Caco-2 (cell line): ENCODE measurements at regions of chr3 and their contacts with region 1.

Region 1: GRCh38 chr3:32781210-32781968 is 36.4 kb upstream of the TRIM71 start:
- DNase-seq: peak; percentile 89 to 92
- H3K4me3 ChIP-seq: peak overlapping the region; percentile 88
- H3K4me3 Mint-ChIP-seq: peak overlapping the region; percentile 95
- H3K27ac Mint-ChIP-seq: peak overlapping the region; percentile 95
- H3K4me1 ChIP-seq: peaks cover 11% of the 10 kb centered on the region
- H3K4me1 Mint-ChIP-seq: peaks cover 13% of the 10 kb centered on the region
- H3K27me3 ChIP-seq: no peaks in the 10 kb centered on the region
- H3K27me3 Mint-ChIP-seq: no peaks in the 10 kb centered on the region
- CTCF ChIP-seq: peak; percentile 77 to 80

Region 2: GRCh38 chr3:32733631-32734229 is 47.7 kb before region 1 on chr3:
- CTCF ChIA-PET with region 1: interaction called, 4 read pairs
- POLR2A ChIA-PET with region 1: no interaction called
- intact Hi-C with region 1: loop called (anchors 1 kb)
- DNase-seq: peak in 1 of 2 experiments; percentile 39
- H3K4me3 ChIP-seq: no peak overlapping the region
- H3K4me3 Mint-ChIP-seq: no peak overlapping the region
- H3K27ac Mint-ChIP-seq: no peak overlapping the region
- H3K4me1 ChIP-seq: no peaks in the 10 kb centered on the region
- H3K4me1 Mint-ChIP-seq: no peaks in the 10 kb centered on the region
- H3K27me3 ChIP-seq: no peaks in the 10 kb centered on the region
- H3K27me3 Mint-ChIP-seq: no peaks in the 10 kb centered on the region
- CTCF ChIP-seq: peak; percentile 47 to 52

Region 3: DNA sequence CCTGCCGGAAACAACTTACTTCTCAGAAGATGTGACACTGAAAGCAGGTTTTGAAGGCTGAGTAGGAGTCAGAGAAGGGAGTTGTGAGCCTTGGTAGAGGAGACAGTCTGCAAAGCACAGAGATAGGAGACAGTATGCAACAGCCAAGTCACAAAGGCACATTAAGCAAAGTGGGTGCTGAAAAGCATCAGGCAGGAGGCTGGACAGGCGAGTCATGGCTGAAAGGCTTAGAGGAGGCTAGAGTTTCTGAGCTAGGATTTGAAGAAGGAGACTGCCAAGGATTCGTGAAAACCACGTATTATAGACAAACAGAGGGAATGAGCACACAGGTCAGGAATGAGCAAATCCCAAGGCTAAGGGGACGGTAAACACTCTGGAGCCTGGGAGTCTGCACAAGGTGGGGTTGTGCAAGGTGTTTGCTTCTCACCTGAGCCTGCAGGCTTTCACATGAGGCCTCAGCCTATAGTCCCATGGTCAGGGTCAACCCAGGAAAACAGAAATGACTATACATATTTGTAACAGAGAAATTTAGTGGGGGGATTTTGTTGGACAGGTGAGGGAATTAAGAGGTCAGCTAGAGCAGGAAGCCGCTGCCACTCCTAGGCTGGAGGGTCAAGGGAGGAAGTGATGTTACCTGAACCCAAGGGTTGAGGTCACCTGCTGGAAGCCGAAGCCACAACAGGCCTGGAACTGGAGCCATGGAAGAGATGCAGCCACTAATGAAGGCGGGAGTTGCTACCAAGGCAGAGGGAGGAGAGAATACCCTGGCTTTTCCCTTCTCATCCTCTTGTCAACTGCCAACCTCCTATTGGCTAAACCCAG is 13.3 kb after region 1 on chr3:
- CTCF ChIA-PET with region 1: interaction called, 11 read pairs
- POLR2A ChIA-PET with region 1: no interaction called
- intact Hi-C with region 1: loop called (anchors 1 kb)
- DNase-seq: peak; percentile 83 to 87
- H3K4me3 ChIP-seq: no peak overlapping the region
- H3K4me3 Mint-ChIP-seq: peak overlapping the region; percentile 8
- H3K27ac Mint-ChIP-seq: peak overlapping the region; percentile 55
- H3K4me1 ChIP-seq: peaks cover 43% of the 10 kb centered on the region
- H3K4me1 Mint-ChIP-seq: peaks cover 39% of the 10 kb centered on the region
- H3K27me3 ChIP-seq: no peaks in the 10 kb centered on the region
- H3K27me3 Mint-ChIP-seq: no peaks in the 10 kb centered on the region
- CTCF ChIP-seq: no peak

Region 4: GRCh38 chr3:32816439-32817256 is 35.3 kb after region 1 on chr3:
- CTCF ChIA-PET with region 1: interaction called, 4 read pairs
- POLR2A ChIA-PET with region 1: interaction called, 11 read pairs
- intact Hi-C with region 1: loop called (anchors 1 kb)
- DNase-seq: peak; percentile 76 to 91
- H3K4me3 ChIP-seq: peak overlapping the region; percentile 78
- H3K4me3 Mint-ChIP-seq: peak overlapping the region; percentile 86
- H3K27ac Mint-ChIP-seq: peak overlapping the region; percentile 93
- H3K4me1 ChIP-seq: peaks cover 31% of the 10 kb centered on the region
- H3K4me1 Mint-ChIP-seq: peaks cover 15% of the 10 kb centered on the region
- H3K27me3 ChIP-seq: no peaks in the 10 kb centered on the region
- H3K27me3 Mint-ChIP-seq: no peaks in the 10 kb centered on the region
- CTCF ChIP-seq: no peak

Region 5: GRCh38 chr3:32821686-32822296 is 40.4 kb after region 1 on chr3:
- CTCF ChIA-PET with region 1: interaction called, 3 read pairs
- POLR2A ChIA-PET with region 1: interaction called, 11 read pairs
- intact Hi-C with region 1: loop called (anchors 1 kb)
- DNase-seq: peak in 1 of 2 experiments; percentile 50
- H3K4me3 ChIP-seq: peak overlapping the region; percentile 78
- H3K4me3 Mint-ChIP-seq: peak overlapping the region; percentile 86
- H3K27ac Mint-ChIP-seq: peak overlapping the region; percentile 7
- H3K4me1 ChIP-seq: peaks cover 48% of the 10 kb centered on the region
- H3K4me1 Mint-ChIP-seq: peaks cover 17% of the 10 kb centered on the region
- H3K27me3 ChIP-seq: no peaks in the 10 kb centered on the region
- H3K27me3 Mint-ChIP-seq: no peaks in the 10 kb centered on the region
- CTCF ChIP-seq: no peak

Region 6: GRCh38 chr3:32842531-32842931 is 61.1 kb after region 1 on chr3:
- CTCF ChIA-PET with region 1: interaction called, 3 read pairs
- POLR2A ChIA-PET with region 1: no interaction called
- intact Hi-C with region 1: loop called (anchors 1 kb)
- DNase-seq: no peak
- H3K4me3 ChIP-seq: no peak overlapping the region
- H3K4me3 Mint-ChIP-seq: peak overlapping the region; percentile 24
- H3K27ac Mint-ChIP-seq: peak overlapping the region; percentile 50
- H3K4me1 ChIP-seq: peaks cover 81% of the 10 kb centered on the region
- H3K4me1 Mint-ChIP-seq: peaks cover 43% of the 10 kb centered on the region
- H3K27me3 ChIP-seq: no peaks in the 10 kb centered on the region
- H3K27me3 Mint-ChIP-seq: no peaks in the 10 kb centered on the region
- CTCF ChIP-seq: no peak

Region 7: DNA sequence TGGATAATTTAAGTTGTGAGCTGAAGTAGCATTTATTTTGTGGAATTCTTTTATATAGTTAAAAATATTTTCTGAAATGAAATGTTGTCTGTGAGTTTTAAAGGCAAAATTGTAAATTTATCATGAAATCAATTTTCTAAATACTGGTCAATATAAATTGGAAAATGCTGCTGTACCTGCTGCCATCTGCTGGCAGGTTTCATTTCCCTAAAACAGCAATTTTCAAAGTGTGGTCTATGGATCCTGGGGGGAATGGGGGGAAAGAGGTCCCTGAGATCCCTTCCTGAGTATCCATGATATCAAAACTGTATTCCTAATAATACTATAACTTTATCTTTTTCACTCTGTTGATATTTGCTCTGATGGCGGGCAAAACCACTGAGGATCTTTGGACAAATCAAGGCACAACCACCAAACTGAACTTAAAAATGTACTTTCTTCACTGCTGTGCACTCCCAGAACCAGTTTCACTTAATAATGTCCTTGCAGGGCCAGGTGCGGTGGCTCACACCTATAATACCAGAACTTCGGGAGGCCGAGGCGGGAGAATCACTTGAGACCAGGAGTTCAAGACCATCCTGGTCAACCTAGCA is 152.9 kb after region 1 on chr3:
- CTCF ChIA-PET with region 1: interaction called, 3 read pairs
- POLR2A ChIA-PET with region 1: no interaction called
- intact Hi-C with region 1: loop called (anchors 1 kb)
- DNase-seq: peak in 1 of 2 experiments; percentile 42
- H3K4me3 ChIP-seq: no peak overlapping the region
- H3K4me3 Mint-ChIP-seq: no peak overlapping the region
- H3K27ac Mint-ChIP-seq: no peak overlapping the region
- H3K4me1 ChIP-seq: no peaks in the 10 kb centered on the region
- H3K4me1 Mint-ChIP-seq: peaks cover 8% of the 10 kb centered on the region
- H3K27me3 ChIP-seq: no peaks in the 10 kb centered on the region
- H3K27me3 Mint-ChIP-seq: no peaks in the 10 kb centered on the region
- CTCF ChIP-seq: peak; percentile 71 to 80